ENCODE measurements at regions of chr14 and their contacts with region 1.

Region 1: GRCh38 chr14:103576371-103577024 is 13.7 kb downstream of the COA8 start:
- DNase-seq: peak; percentile 88 to 95 (median 91)
- ATAC-seq: peak; percentile 92 to 98 (median 97)
- H3K4me3 ChIP-seq: peak overlapping the region in 1 of 12 donors; percentile 11
- H3K27ac ChIP-seq: peak overlapping the region in 11 of 12 donors; percentile 27 to 76 (median 58)
- H3K4me1 ChIP-seq: peaks cover 3 to 49% (median 20%) of the 10 kb centered on the region in 12 donors
- H3K27me3 ChIP-seq: no peaks in the 10 kb centered on the region
- CTCF ChIP-seq: no peak
- POLR2A ChIP-seq: no peak

Region 2: DNA sequence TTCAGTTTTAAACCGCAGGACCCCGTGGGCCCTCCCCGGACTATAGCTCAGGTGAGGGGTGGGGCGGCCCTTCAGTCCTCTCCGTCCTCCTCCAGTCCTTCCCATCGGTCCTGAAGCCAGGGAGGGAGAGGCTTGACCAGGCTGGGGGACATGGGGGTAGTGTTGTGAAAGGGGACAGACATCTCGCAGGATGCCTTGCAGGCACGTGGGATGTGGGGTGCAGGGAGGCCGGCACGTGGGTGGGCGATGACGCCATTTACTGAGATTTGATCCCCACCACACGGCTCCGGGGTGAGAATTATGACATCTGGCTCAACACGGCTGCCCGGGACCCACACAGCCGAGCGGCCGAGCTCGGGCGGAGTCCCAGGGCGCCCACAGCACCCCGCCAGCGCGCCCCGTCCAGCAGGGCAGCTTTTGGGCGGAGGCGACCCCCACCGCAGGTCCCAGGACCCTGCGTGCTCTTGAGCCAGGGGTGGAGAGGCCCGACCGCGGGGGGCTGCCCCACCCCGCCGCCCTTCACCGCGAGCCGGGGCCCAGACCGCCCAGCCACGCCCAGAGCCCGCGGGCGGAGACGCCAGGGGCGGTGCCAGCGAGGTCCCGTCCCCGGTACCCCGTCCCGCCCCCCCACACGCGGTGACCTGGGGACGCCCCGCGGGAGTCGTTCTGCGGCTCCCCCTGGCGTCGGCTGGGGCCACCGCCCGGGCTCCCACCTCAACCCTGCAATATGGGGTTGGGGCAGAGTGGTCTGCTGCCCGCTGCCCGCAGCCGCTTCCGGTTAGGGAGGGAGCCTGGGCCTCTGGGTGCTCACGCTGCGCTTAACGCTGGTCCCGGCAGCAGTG is 485.2 kb before region 1 on chr14:
- intact Hi-C with region 1: no loop called
- DNase-seq: peak in 4 of 5 donors; percentile 48 to 76 (median 67)
- ATAC-seq: peak; percentile 7 to 80 (median 64)
- H3K4me3 ChIP-seq: peak overlapping the region; percentile 23 to 62 (median 52)
- H3K27ac ChIP-seq: peak overlapping the region in 3 of 12 donors; percentile 2 to 30 (median 14)
- H3K4me1 ChIP-seq: peaks cover 0 to 32% (median 6%) of the 10 kb centered on the region in 12 donors
- H3K27me3 ChIP-seq: peaks cover 0 to 25% (median 0%) of the 10 kb centered on the region in 9 donors
- CTCF ChIP-seq: peak; percentile 28 to 65 (median 52)
- POLR2A ChIP-seq: no peak

Region 3: DNA sequence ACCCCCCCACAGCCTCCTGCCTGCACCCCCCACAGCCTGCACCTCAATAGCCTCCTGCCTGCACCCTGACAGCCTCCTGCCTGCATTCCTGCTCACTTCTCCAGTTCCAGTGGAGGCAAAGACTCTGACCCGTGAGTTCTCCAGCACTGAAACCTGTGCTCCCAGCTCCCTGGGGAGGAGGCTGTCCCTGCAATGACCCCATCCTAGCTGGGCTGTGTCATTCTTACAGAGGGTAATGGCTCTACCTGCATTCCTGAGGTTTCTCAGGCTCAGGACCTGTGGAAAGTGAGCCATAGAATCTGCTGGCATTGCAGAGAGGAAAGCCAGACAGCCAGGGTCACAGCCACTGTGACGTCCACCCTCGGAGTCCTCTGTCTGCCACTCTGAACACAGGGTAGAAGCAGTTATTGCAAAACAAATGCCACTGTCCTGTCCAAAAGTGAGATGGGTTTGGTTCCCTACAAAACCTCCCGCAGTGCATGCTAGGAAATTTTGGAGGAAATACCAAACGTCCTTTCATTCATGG is 415.6 kb before region 1 on chr14:
- intact Hi-C with region 1: no loop called
- DNase-seq: no peak
- ATAC-seq: no peak
- H3K4me3 ChIP-seq: no peak overlapping the region
- H3K27ac ChIP-seq: no peak overlapping the region
- H3K4me1 ChIP-seq: peaks cover 0 to 3% (median 0%) of the 10 kb centered on the region in 12 donors
- H3K27me3 ChIP-seq: no peaks in the 10 kb centered on the region
- CTCF ChIP-seq: no peak
- POLR2A ChIP-seq: no peak

Region 4: GRCh38 chr14:103292426-103293374 is 283.8 kb before region 1 on chr14:
- intact Hi-C with region 1: no loop called
- DNase-seq: peak; percentile 69 to 85 (median 76)
- ATAC-seq: peak; percentile 74 to 94 (median 90)
- H3K4me3 ChIP-seq: no peak overlapping the region
- H3K27ac ChIP-seq: no peak overlapping the region
- H3K4me1 ChIP-seq: no peaks in the 10 kb centered on the region
- H3K27me3 ChIP-seq: peaks cover 0 to 25% (median 0%) of the 10 kb centered on the region in 9 donors
- CTCF ChIP-seq: peak; percentile 85 to 98 (median 88)
- POLR2A ChIP-seq: no peak

Region 5: GRCh38 chr14:103657471-103657870 is 81.0 kb after region 1 on chr14:
- intact Hi-C with region 1: no loop called
- DNase-seq: peak in 2 of 5 donors; percentile 54 to 57
- ATAC-seq: peak in 3 of 4 donors; percentile 69 to 79 (median 73)
- H3K4me3 ChIP-seq: no peak overlapping the region
- H3K27ac ChIP-seq: peak overlapping the region in 3 of 12 donors; percentile 17 to 43 (median 23)
- H3K4me1 ChIP-seq: peaks cover 5 to 52% (median 38%) of the 10 kb centered on the region in 12 donors
- H3K27me3 ChIP-seq: no peaks in the 10 kb centered on the region
- CTCF ChIP-seq: no peak
- POLR2A ChIP-seq: no peak

Region 6: DNA sequence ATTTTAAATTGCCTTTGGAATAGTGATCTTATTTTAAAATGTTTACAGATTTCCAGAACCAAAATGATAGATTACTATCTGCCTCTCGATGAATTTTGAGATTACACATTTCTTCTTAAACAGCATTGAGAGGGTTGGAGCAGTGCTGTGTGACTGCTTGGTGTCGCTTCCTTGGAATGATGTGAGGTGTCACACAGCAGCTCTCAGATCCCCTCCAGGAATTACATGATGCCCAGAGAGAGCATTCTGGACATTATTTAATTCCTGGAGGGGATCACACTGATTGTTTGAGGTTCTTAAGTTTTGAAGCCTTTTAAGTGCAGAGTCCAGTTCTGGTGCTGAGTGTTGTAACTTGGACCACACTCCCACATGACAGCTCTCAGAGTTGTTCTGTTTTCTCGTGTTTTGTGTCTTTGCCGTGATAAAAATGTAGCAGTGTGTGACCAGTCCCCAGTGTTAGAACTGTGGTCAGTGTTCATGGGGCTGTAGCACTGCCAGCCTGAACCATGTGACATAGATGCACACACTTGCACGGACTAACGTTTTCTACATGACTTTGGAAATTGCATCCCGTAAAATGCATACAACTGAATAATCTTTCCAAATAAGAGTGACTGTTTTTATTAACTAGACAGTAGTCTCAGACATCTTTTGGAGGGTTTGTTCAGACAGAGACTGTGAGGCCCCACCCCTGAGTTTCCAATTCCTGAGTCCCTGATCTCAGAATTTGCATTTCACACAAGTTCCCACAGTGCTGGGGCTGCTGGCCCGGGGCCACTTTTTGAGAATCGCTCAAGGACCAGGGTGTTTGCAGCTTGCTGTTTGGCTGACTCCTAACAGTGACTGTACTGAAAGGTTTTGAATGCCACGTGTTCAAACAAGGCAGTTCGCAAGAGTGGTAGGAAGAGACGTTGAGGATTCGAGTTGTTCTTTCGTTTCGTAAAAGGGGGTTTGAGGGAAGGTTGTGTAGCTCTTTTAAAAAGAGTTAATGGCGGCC is 112.7 kb after region 1 on chr14:
- intact Hi-C with region 1: loop called in 3 of 10 experiments (anchors 10 kb)
- DNase-seq: peak in 4 of 5 donors; percentile 46 to 64 (median 54)
- ATAC-seq: peak; percentile 34 to 72 (median 65)
- H3K4me3 ChIP-seq: peak overlapping the region in 1 of 12 donors; percentile 14
- H3K27ac ChIP-seq: peak overlapping the region in 3 of 12 donors; percentile 20 to 24 (median 21)
- H3K4me1 ChIP-seq: peaks cover 0 to 58% (median 20%) of the 10 kb centered on the region in 12 donors
- H3K27me3 ChIP-seq: no peaks in the 10 kb centered on the region
- CTCF ChIP-seq: no peak
- POLR2A ChIP-seq: no peak

Region 7: GRCh38 chr14:103715052-103716000 is 138.8 kb after region 1 on chr14 and contains the starts of genes XRCC3 and ZFYVE21:
- intact Hi-C with region 1: loop called in 2 of 10 experiments (anchors 10 kb)
- DNase-seq: peak; percentile 99 to 100 (median 100)
- ATAC-seq: peak; percentile 95 to 98 (median 96)
- H3K4me3 ChIP-seq: peak within 1 kb of the TSS; percentile 64 to 97 (median 82)
- H3K27ac ChIP-seq: peak within 1 kb of the TSS; percentile 71 to 91 (median 84)
- H3K4me1 ChIP-seq: peaks cover 17 to 73% (median 51%) of the 10 kb centered on the region in 12 donors
- H3K27me3 ChIP-seq: no peaks in the 10 kb centered on the region
- CTCF ChIP-seq: no peak
- POLR2A ChIP-seq: peak; percentile 70 to 91
- total RNA-seq, gene XRCC3: 1.9 to 8.7 (median 3.1) TPM
- total RNA-seq, gene ZFYVE21: 44.1 to 79.4 (median 52.5) TPM

Region 8: GRCh38 chr14:103910262-103910935 is 333.9 kb after region 1 on chr14:
- intact Hi-C with region 1: loop called in 4 of 10 experiments (anchors 5 to 10 kb)
- DNase-seq: peak; percentile 80 to 88 (median 81)
- ATAC-seq: peak; percentile 91 to 97 (median 96)
- H3K4me3 ChIP-seq: peak overlapping the region in 8 of 12 donors; percentile 0 to 43 (median 26)
- H3K27ac ChIP-seq: peak overlapping the region in 8 of 12 donors; percentile 14 to 56 (median 34)
- H3K4me1 ChIP-seq: peaks cover 0 to 13% (median 10%) of the 10 kb centered on the region in 12 donors
- H3K27me3 ChIP-seq: no peaks in the 10 kb centered on the region
- CTCF ChIP-seq: peak; percentile 62 to 91 (median 84)
- POLR2A ChIP-seq: no peak

Region 9: GRCh38 chr14:103984196-103984595 is 407.7 kb after region 1 on chr14:
- intact Hi-C with region 1: loop called in 5 of 10 experiments (anchors 5 to 10 kb)
- DNase-seq: no peak
- ATAC-seq: no peak
- H3K4me3 ChIP-seq: no peak overlapping the region
- H3K27ac ChIP-seq: no peak overlapping the region
- H3K4me1 ChIP-seq: no peaks in the 10 kb centered on the region
- H3K27me3 ChIP-seq: no peaks in the 10 kb centered on the region
- CTCF ChIP-seq: no peak
- POLR2A ChIP-seq: no peak